ENCODE measurements at regions of chr2 and their contacts with region 1.

Region 1: GRCh38 chr2:1546023-1546591 is 132.8 kb downstream of the TPO start:
- DNase-seq: peak in 1 of 2 experiments; percentile 70
- H3K4me3 ChIP-seq: no peak overlapping the region
- H3K4me3 Mint-ChIP-seq: no peak overlapping the region
- H3K27ac Mint-ChIP-seq: no peak overlapping the region
- H3K4me1 ChIP-seq: peaks cover 16% of the 10 kb centered on the region
- H3K4me1 Mint-ChIP-seq: peaks cover 14% of the 10 kb centered on the region
- H3K27me3 ChIP-seq: no peaks in the 10 kb centered on the region
- H3K27me3 Mint-ChIP-seq: no peaks in the 10 kb centered on the region
- CTCF ChIP-seq: peak; percentile 79 to 81

Region 2: DNA sequence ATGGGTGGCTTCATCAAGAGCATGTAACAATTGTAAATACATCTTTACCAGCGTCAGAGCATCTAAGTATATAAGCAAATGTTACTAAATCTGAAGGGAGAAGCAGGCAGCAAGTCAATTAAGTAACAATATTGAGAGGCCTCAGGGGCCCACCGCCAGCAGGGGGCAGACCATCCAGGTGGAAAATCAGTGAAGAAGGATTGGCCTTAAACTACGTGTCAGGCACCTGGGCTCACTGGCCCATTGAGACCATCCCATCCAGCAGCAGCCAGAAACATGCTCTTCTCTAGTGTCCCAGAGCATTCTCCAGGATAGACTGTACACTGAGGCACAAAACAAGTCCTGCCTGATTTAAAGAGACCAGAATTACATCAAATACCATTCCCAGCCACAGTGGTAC is 691.6 kb before region 1 on chr2:
- CTCF ChIA-PET with region 1: no interaction called
- POLR2A ChIA-PET with region 1: no interaction called
- intact Hi-C with region 1: loop called (anchors 1 kb)
- DNase-seq: peak in 1 of 2 experiments; percentile 15
- H3K4me3 ChIP-seq: no peak overlapping the region
- H3K4me3 Mint-ChIP-seq: no peak overlapping the region
- H3K27ac Mint-ChIP-seq: no peak overlapping the region
- H3K4me1 ChIP-seq: no peaks in the 10 kb centered on the region
- H3K4me1 Mint-ChIP-seq: no peaks in the 10 kb centered on the region
- H3K27me3 ChIP-seq: no peaks in the 10 kb centered on the region
- H3K27me3 Mint-ChIP-seq: peaks cover 7% of the 10 kb centered on the region
- CTCF ChIP-seq: peak in 1 of 2 experiments; percentile 22

Region 3: DNA sequence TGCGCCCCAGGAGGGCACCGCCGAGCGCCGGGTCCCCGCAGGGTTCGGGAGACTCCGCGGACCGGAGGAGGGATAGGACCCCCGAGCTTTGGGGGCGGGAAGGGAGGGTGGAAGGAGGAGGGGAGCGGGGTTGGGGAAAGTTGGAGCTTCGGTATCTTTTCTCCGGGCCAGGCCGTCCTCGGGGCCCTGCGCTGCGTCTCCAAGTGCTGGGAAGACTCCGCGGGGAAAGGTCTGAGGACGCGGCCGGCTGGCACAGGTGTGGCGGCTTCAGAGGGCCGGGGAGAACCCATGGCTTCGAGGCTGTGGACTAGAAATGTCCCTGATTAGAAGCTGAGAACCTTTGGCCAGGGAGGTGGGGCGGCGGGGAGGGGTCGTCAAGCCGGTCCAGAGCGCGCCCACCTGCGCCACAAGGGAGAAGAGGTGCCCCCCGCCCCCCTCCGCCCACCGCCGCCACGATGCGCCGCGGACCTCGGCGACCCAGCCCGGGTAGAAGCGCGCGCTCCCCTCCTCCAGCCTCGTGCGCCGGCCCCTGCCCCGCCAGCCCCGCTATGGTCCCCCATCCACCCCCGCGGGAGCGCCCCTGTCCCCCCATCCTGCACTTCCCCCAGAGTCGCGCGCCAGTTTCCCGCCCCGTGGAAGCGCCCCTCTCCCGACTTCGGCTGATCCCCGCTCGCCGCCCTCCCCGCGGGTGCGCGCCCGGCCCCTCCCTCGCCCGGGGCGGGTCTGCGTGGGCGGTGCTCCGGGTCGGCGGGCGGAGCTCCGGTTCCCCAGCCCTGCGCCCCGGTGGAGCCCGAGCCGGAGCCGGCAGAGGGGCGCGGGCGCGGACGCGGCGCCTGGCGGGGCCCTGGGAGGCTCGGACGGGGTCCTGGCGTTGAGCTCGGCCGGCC is 595.8 kb before region 1 on chr2 and contains the start of gene SNTG2:
- CTCF ChIA-PET with region 1: no interaction called
- POLR2A ChIA-PET with region 1: no interaction called
- intact Hi-C with region 1: loop called (anchors 1 kb)
- DNase-seq: no peak
- H3K4me3 ChIP-seq: no peak within 1 kb of the TSS
- H3K4me3 Mint-ChIP-seq: no peak within 1 kb of the TSS
- H3K27ac Mint-ChIP-seq: no peak within 1 kb of the TSS
- H3K4me1 ChIP-seq: peaks cover 6% of the 10 kb centered on the region; the same call in 1 of the 2 replicates
- H3K4me1 Mint-ChIP-seq: no peaks in the 10 kb centered on the region
- H3K27me3 ChIP-seq: no peaks in the 10 kb centered on the region
- H3K27me3 Mint-ChIP-seq: no peaks in the 10 kb centered on the region
- CTCF ChIP-seq: no peak
- total RNA-seq, gene SNTG2: not detected in 2 replicates

Region 4: GRCh38 chr2:1246239-1246638 is 299.9 kb before region 1 on chr2:
- CTCF ChIA-PET with region 1: no interaction called
- POLR2A ChIA-PET with region 1: no interaction called
- intact Hi-C with region 1: loop called (anchors 10 kb)
- DNase-seq: no peak
- H3K4me3 ChIP-seq: no peak overlapping the region
- H3K4me3 Mint-ChIP-seq: no peak overlapping the region
- H3K27ac Mint-ChIP-seq: no peak overlapping the region
- H3K4me1 ChIP-seq: no peaks in the 10 kb centered on the region
- H3K4me1 Mint-ChIP-seq: no peaks in the 10 kb centered on the region
- H3K27me3 ChIP-seq: no peaks in the 10 kb centered on the region
- H3K27me3 Mint-ChIP-seq: peaks cover 17% of the 10 kb centered on the region
- CTCF ChIP-seq: no peak

Region 5: DNA sequence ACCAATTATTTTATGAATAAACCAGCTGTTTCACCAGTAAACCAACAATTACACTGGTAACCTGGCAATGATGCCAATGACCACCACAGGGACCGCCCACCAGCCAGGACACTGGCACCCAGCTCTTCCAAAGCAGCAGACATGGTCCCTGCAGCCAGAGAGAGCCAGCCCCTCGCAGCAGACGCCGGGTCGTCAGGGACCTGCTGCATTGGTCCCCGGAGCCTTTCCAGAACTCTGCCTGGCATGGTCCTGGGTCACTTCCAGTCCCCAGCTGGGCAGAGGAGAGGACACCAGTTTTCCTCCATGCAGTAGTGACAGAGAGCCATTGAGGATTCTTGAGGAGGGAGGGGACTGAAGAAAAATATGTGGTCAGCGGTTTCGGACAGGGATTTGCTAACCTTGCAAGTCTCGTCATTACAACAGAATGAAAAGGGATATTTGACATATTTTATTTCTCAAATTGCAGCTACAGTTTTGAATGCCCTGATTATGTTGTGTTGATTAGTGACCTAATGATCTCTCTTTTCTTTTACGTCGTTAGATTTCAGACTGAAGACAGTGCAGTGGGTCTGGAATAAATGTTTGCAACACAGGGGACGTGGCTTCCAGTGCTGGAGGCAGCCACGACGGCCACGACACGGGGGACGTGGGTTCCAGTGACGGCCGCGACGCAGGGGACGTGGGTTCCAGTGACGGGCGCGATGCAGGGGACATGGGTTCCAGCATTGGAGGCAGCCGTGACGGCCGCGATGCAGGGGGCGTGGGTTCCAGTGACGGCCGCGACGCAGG is 21.6 kb after region 1 on chr2:
- CTCF ChIA-PET with region 1: no interaction called
- POLR2A ChIA-PET with region 1: no interaction called
- intact Hi-C with region 1: no loop called
- DNase-seq: no peak
- H3K4me3 ChIP-seq: no peak overlapping the region
- H3K4me3 Mint-ChIP-seq: no peak overlapping the region
- H3K27ac Mint-ChIP-seq: no peak overlapping the region
- H3K4me1 ChIP-seq: no peaks in the 10 kb centered on the region
- H3K4me1 Mint-ChIP-seq: no peaks in the 10 kb centered on the region
- H3K27me3 ChIP-seq: no peaks in the 10 kb centered on the region
- H3K27me3 Mint-ChIP-seq: no peaks in the 10 kb centered on the region
- CTCF ChIP-seq: no peak